Esophagus muscularis mucosa (tissue), 4 donors: ENCODE measurements at regions of chr11 and their contacts with region 1.

Region 1: GRCh38 chr11:75204685-75205563 is 35.6 kb upstream of the TPBGL start:
- DNase-seq: peak; percentile 95
- H3K4me3 ChIP-seq: no peak overlapping the region
- H3K27ac ChIP-seq: no peak overlapping the region
- H3K4me1 ChIP-seq: peaks cover 0 to 6% (median 0%) of the 10 kb centered on the region in 4 donors
- H3K27me3 ChIP-seq: peaks cover 0 to 14% (median 0%) of the 10 kb centered on the region in 4 donors
- CTCF ChIP-seq: peak; percentile 79 to 84 (median 83)
- EP300 ChIP-seq: no peak
- POLR2A ChIP-seq: no peak

Region 2: GRCh38 chr11:74909385-74909784 is 295.5 kb before region 1 on chr11:
- intact Hi-C with region 1: no loop called
- DNase-seq: no peak
- H3K4me3 ChIP-seq: no peak overlapping the region
- H3K27ac ChIP-seq: no peak overlapping the region
- H3K4me1 ChIP-seq: no peaks in the 10 kb centered on the region
- H3K27me3 ChIP-seq: no peaks in the 10 kb centered on the region
- CTCF ChIP-seq: no peak
- EP300 ChIP-seq: no peak
- POLR2A ChIP-seq: no peak

Region 3: DNA sequence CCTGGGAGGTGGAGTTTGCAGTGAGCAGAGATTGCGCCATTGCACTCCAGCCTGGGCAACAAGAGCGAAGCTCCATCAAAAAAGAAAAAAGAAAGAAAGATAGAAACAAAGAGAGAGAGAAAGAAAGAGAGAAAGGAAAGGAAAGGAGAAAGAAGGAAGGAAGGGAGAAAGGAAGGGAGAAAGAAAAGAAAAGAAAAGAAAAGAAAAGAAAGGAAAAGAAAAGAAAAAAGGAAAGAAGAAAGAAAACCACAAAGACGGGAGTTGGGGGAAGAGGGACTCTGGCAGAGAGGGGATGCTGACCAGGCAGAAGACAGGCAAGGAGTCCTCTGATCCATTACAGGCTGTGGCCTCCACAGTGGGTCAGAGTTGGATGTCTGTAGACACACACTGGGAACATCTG is 72.8 kb before region 1 on chr11:
- intact Hi-C with region 1: no loop called
- DNase-seq: no peak
- H3K4me3 ChIP-seq: no peak overlapping the region
- H3K27ac ChIP-seq: no peak overlapping the region
- H3K4me1 ChIP-seq: no peaks in the 10 kb centered on the region
- H3K27me3 ChIP-seq: peaks cover 0 to 37% (median 0%) of the 10 kb centered on the region in 4 donors
- CTCF ChIP-seq: no peak
- EP300 ChIP-seq: no peak
- POLR2A ChIP-seq: no peak

Region 4: DNA sequence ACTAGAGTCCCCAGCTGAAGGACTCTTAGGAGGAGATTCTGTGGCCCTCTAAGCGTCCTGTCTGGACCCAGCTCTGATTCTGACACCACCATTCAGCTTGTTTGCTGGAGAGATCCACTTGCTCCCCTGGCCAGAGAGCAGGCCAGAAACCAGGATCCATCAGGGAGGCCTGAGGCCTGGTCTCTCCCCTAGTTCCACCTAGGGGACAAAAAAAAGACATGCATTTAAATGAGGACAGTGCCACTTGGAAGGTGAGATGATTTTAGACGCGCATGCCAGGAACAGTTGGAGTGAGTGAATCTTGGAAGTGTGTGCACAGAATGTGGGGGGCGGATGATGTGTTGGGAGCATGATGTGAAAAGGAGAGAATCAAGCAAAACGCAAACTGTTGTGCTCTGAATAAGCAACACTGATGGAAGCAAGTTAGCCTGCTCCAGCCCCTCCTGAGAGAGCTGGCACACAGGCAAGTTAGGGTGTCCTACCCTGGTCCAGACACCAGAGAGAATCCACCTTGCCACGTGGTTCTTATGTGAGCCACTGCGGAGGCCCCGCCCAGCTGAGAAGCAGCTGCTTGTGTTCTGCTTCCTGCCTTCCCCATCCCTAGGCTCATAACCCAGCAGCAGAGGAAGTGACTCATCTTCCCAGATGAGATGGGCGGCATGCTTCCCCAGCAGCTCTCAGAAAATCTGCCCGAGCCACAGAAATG is 62.1 kb before region 1 on chr11:
- intact Hi-C with region 1: loop called (anchors 5 kb)
- DNase-seq: peak; percentile 94
- H3K4me3 ChIP-seq: no peak overlapping the region
- H3K27ac ChIP-seq: no peak overlapping the region
- H3K4me1 ChIP-seq: peaks cover 15 to 33% (median 25%) of the 10 kb centered on the region in 4 donors
- H3K27me3 ChIP-seq: peaks cover 0 to 22% (median 0%) of the 10 kb centered on the region in 4 donors
- CTCF ChIP-seq: no peak
- EP300 ChIP-seq: no peak
- POLR2A ChIP-seq: no peak